HCT116 (cell line): ENCODE measurements at regions of chr13 and their contacts with region 1.

Region 1: DNA sequence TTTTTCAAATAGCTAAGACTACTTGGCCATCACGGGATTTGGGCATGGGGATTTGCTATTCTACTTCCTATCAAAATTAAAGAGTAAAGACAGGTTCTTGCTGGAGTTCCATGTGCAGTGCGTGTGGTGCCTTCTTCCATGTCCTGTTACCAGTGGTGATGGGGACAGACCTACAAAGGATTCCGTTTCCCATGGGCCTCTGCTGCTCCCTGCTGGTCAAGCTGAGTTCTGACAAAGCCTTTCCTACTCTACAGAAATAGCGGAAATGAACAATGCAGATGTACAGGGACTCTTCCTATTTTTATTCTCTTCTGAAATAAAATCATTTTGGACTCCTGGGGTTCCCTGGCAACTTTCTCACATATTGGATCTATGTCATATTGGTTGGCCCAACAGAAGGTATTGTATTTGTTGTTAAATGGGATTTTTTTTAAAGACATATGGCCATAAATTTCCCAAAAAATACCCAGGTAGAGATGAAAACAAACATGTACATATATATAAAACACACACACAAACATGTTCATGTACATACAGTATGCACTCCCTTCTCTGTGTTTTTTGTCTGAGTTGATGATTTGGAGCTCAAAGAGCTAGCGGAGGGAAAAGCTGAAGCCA is 90.5 kb upstream of the SLC15A1 start:
- DNase-seq: peak; percentile 57
- ATAC-seq: peak; percentile 84
- H3K4me3 ChIP-seq: no peak overlapping the region
- H3K27ac ChIP-seq: no peak overlapping the region
- H3K4me1 ChIP-seq: peaks cover 0 to 4% of the 10 kb centered on the region in 2 experiments; a peak in 1 of 4 replicates
- H3K27me3 ChIP-seq: no peaks in the 10 kb centered on the region
- CTCF ChIP-seq: peak; percentile 70 to 95 (median 91)
- POLR2A ChIP-seq: no peak
- RAD21 ChIP-seq: peak; percentile 86

Region 2: DNA sequence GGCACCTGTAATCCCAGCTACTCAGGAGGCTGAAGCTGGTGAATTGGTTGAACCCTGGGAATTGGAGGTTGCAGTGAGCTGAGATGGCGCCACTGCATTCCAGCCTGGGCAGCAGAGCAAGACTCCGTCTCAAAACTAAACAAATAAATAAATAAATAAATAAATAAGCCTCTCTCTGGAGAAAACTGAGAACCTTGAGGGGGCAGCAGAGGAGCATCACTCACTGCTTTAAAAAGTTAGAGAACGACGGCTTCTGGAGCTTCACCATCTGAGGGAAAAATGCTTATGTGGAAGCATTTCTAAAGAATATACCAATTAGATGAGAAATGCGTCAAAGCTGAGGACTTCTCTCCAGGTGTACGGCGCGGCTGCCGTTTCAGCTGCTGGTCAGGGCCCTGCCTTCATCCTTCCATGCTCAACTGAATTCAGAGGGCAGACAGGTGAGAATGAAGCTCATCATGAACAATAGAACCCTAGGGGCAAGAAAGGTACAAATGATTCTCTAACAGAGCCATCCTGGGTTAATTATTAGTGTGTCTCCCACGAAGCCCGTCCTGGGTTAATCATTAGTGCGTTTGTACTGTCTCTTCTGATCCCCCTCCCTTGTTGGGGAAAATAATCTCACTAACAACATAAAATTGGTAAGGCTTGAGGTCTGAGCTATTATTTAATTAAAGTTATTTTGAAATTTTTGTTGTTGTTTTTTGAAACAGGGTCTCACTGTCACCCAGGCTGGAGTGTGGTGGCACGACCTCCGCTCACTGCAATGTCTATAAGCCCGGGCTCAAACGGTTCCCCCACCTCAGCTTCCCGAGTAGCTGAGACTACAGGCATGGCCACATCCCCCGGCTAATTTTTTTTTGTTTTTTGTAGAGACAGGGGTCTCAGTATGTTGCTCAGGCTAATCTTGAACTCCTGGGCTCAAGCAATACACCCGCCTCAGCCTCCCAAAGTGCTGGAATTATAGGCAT is 809.4 kb before region 1 on chr13:
- CTCF ChIA-PET with region 1: interaction called, 6 read pairs
- POLR2A ChIA-PET with region 1: no interaction called
- RAD21 ChIA-PET with region 1: no interaction called
- intact Hi-C with region 1: loop called (anchors 5 kb)
- DNase-seq: peak; percentile 16
- ATAC-seq: peak; percentile 83
- H3K4me3 ChIP-seq: no peak overlapping the region
- H3K27ac ChIP-seq: no peak overlapping the region
- H3K4me1 ChIP-seq: no peaks in the 10 kb centered on the region
- H3K27me3 ChIP-seq: no peaks in the 10 kb centered on the region
- CTCF ChIP-seq: peak; percentile 38 to 76 (median 39); a peak in 5 of 6 replicates
- POLR2A ChIP-seq: no peak
- RAD21 ChIP-seq: peak; percentile 74

Region 3: DNA sequence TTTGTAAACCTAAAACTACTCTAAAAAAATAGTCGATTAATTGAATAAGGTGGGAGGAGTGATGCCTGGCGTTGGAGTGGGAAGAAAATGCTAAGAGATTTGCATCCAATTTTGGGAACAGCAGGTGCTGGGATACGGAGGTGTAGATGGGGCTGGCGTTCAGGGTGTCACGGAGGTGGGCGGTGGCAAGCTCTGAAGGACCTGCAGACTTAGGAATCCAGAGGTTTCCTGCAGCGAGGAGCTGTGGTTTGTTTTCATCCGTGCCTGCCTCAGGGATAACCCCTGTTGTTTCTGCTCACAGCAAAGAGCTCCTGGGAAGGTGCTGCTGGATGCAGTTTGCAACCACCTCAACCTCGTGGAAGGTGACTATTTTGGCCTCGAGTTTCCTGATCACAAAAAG is 499.5 kb before region 1 on chr13:
- CTCF ChIA-PET with region 1: no interaction called
- POLR2A ChIA-PET with region 1: no interaction called
- RAD21 ChIA-PET with region 1: no interaction called
- intact Hi-C with region 1: no loop called
- DNase-seq: no peak
- ATAC-seq: no peak
- H3K4me3 ChIP-seq: no peak overlapping the region
- H3K27ac ChIP-seq: no peak overlapping the region
- H3K4me1 ChIP-seq: no peaks in the 10 kb centered on the region
- H3K27me3 ChIP-seq: no peaks in the 10 kb centered on the region
- CTCF ChIP-seq: no peak
- POLR2A ChIP-seq: no peak
- RAD21 ChIP-seq: no peak

Region 4: DNA sequence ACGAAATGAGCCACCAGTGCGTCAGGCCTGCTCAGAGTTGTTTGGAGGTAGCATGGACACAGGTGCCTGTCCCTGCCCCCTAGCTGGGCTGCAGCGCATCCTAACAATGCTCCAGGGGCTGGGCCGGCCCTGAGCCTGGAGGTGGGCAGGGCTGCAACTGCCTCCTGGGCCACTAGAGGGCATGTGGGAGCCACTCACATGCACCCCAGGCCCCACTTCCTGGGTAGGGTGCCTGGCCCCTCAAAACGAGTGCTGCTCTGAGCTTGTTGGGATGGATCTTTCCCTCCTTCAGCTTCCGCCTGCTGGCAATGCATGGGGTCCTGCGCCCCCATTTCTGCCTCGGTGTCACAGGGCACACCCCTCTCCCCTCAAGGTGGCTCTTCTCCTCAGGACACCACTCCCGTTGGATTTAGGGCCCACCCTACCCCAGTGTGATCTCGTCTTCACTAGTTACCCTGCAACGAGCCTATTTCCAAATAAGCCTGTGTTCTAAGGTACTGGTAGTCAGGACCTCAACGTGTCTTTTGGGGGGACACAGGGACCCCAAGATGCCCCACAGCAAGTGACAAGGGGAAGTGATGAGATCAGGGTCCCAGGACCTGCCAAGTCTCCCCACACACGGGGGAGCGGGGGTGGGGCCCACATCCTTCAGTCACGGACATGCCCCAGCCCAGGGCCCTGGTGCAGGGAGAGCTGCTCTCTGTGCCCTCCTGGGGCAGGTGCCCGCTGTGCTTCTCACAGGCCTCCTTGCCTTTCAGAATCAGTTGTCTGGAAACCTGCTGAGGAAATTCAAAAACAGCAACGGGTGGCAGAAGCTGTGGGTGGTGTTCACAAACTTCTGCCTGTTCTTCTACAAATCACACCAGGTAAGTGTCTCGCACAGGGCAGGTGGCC is 397.4 kb before region 1 on chr13:
- CTCF ChIA-PET with region 1: no interaction called
- POLR2A ChIA-PET with region 1: no interaction called
- RAD21 ChIA-PET with region 1: no interaction called
- intact Hi-C with region 1: loop called (anchors 5 kb)
- DNase-seq: peak; percentile 41
- ATAC-seq: peak; percentile 87
- H3K4me3 ChIP-seq: no peak overlapping the region
- H3K27ac ChIP-seq: no peak overlapping the region; the same call in 1 of the 2 replicates
- H3K4me1 ChIP-seq: peaks cover 0 to 35% of the 10 kb centered on the region in 2 experiments; a peak in 2 of 4 replicates
- H3K27me3 ChIP-seq: no peaks in the 10 kb centered on the region
- CTCF ChIP-seq: peak in 2 of 3 experiments; percentile 89 to 97; a peak in 4 of 6 replicates
- POLR2A ChIP-seq: no peak
- RAD21 ChIP-seq: no peak

Region 5: DNA sequence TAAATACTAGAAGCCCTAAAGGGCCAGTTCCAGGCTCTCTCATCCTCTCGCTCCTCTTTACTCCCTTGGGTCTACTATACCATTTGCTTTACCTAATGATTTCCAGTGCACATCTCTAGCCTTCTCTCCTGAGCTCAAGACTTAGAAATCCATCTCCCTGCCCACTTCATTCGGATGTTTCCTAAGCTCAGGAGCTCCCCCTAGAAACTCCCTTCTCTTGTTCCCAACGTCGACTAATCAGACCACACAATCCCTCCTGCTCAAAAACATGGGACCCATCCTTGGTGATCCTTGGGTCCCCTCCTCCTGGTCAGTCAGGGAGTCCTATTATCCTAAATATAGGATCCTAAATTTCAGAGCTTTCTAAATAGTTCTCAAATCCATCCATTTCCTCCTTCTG is 244.9 kb before region 1 on chr13:
- CTCF ChIA-PET with region 1: no interaction called
- POLR2A ChIA-PET with region 1: no interaction called
- RAD21 ChIA-PET with region 1: no interaction called
- intact Hi-C with region 1: no loop called
- DNase-seq: no peak
- ATAC-seq: peak; percentile 82
- H3K4me3 ChIP-seq: no peak overlapping the region
- H3K27ac ChIP-seq: no peak overlapping the region
- H3K4me1 ChIP-seq: no peaks in the 10 kb centered on the region
- H3K27me3 ChIP-seq: peaks cover 2% of the 10 kb centered on the region; the same call in 1 of the 2 replicates
- CTCF ChIP-seq: peak; percentile 24 to 51 (median 35); a peak in 3 of 6 replicates
- POLR2A ChIP-seq: no peak
- RAD21 ChIP-seq: peak; percentile 63

Region 6: GRCh38 chr13:98875146-98875729 is 32.3 kb after region 1 on chr13:
- CTCF ChIA-PET with region 1: no interaction called
- POLR2A ChIA-PET with region 1: no interaction called
- RAD21 ChIA-PET with region 1: no interaction called
- intact Hi-C with region 1: loop called (anchors 1 kb)
- DNase-seq: no peak
- ATAC-seq: no peak
- H3K4me3 ChIP-seq: no peak overlapping the region
- H3K27ac ChIP-seq: no peak overlapping the region
- H3K4me1 ChIP-seq: no peaks in the 10 kb centered on the region
- H3K27me3 ChIP-seq: no peaks in the 10 kb centered on the region
- CTCF ChIP-seq: no peak
- POLR2A ChIP-seq: no peak
- RAD21 ChIP-seq: no peak

Region 7: GRCh38 chr13:99269627-99270241 is 426.8 kb after region 1 on chr13:
- CTCF ChIA-PET with region 1: interaction called, 8 read pairs
- POLR2A ChIA-PET with region 1: no interaction called
- RAD21 ChIA-PET with region 1: interaction called in 1 of 2 experiments, 3 read pairs
- intact Hi-C with region 1: loop called (anchors 10 kb)
- DNase-seq: peak; percentile 38
- ATAC-seq: peak; percentile 78
- H3K4me3 ChIP-seq: no peak overlapping the region
- H3K27ac ChIP-seq: no peak overlapping the region
- H3K4me1 ChIP-seq: no peaks in the 10 kb centered on the region; a peak in 1 of 4 replicates
- H3K27me3 ChIP-seq: no peaks in the 10 kb centered on the region
- CTCF ChIP-seq: peak; percentile 66 to 97 (median 75)
- POLR2A ChIP-seq: no peak
- RAD21 ChIP-seq: peak; percentile 84